ENCODE measurements at regions of chr6 and their contacts with region 1.

Region 1: GRCh38 chr6:32195652-32195901 is 3.1 kb upstream of the GPSM3 start:
- DNase-seq: peak; percentile 99 to 100 (median 100)
- H3K4me3 ChIP-seq: peak overlapping the region in 1 of 2 donors; percentile 97
- H3K4me3 Mint-ChIP-seq: peak overlapping the region; percentile 93 to 100 (median 98)
- H3K27ac ChIP-seq: peak overlapping the region; percentile 98
- H3K27ac Mint-ChIP-seq: peak overlapping the region; percentile 97 to 100 (median 99)
- H3K4me1 ChIP-seq: peaks cover 33% of the 10 kb centered on the region
- H3K4me1 Mint-ChIP-seq: peaks cover 23 to 58% (median 27%) of the 10 kb centered on the region in 4 donors
- H3K27me3 ChIP-seq: no peaks in the 10 kb centered on the region
- H3K27me3 Mint-ChIP-seq: peaks cover 0 to 2% of the 10 kb centered on the region in 2 donors

Region 2: DNA sequence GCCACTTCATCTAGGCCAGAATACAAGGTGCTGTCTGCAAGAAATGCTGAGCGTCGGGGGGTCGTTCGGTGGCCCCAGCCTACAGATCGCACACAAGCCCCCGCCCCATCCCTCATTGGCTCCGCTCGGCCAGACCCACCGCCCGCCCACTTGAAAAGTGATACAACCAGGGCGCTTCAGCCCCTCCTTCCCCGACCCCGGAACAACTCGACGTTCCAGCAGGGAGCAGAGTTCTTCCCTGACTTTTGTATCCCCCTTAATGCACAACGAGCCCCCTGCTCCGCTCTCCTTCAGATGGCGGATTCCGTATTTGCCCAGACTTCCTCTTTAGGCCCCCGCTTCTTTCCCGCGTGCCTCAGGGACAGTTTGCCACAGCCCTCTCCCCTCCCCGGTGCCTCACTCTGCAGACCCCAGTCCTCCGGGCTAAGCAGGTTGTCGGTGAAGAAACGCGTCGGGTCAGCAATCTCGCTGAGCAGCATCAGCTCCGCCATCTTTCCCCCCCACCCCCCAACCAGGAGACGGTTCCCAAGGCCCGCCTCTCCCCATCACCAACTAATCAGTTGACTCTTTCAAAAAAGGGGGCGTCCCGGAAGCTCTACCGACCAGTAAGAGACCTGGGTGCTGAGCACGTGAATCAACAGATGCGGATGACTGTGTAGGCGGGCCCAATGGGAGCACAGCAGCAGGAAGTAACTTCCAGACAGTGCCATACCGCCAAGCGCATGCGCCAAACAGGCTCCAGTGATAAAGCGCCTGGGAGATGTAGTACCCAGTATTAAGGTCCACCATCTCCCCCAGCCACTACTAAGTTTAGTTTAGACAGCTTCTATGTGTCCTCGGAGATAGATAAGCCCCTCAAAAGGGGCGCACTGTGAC is 67.6 kb before region 1 on chr6 and contains the start of gene ATF6B:
- CTCF ChIA-PET with region 1: interaction called, 15 read pairs
- POLR2A ChIA-PET with region 1: interaction called, 188 read pairs
- intact Hi-C with region 1: loop called (anchors 1 kb)
- DNase-seq: peak; percentile 92 to 100 (median 98)
- H3K4me3 ChIP-seq: peak within 1 kb of the TSS; percentile 74 to 87
- H3K4me3 Mint-ChIP-seq: peak within 1 kb of the TSS; percentile 97 to 100 (median 99)
- H3K27ac ChIP-seq: peak within 1 kb of the TSS; percentile 83
- H3K27ac Mint-ChIP-seq: peak within 1 kb of the TSS; percentile 89 to 99 (median 99)
- H3K4me1 ChIP-seq: peaks cover 35% of the 10 kb centered on the region
- H3K4me1 Mint-ChIP-seq: peaks cover 33 to 57% (median 46%) of the 10 kb centered on the region in 4 donors
- H3K27me3 ChIP-seq: no peaks in the 10 kb centered on the region
- H3K27me3 Mint-ChIP-seq: peaks cover 0 to 2% of the 10 kb centered on the region in 2 donors
- total RNA-seq, gene ATF6B: 151 to 154 TPM

Region 3: DNA sequence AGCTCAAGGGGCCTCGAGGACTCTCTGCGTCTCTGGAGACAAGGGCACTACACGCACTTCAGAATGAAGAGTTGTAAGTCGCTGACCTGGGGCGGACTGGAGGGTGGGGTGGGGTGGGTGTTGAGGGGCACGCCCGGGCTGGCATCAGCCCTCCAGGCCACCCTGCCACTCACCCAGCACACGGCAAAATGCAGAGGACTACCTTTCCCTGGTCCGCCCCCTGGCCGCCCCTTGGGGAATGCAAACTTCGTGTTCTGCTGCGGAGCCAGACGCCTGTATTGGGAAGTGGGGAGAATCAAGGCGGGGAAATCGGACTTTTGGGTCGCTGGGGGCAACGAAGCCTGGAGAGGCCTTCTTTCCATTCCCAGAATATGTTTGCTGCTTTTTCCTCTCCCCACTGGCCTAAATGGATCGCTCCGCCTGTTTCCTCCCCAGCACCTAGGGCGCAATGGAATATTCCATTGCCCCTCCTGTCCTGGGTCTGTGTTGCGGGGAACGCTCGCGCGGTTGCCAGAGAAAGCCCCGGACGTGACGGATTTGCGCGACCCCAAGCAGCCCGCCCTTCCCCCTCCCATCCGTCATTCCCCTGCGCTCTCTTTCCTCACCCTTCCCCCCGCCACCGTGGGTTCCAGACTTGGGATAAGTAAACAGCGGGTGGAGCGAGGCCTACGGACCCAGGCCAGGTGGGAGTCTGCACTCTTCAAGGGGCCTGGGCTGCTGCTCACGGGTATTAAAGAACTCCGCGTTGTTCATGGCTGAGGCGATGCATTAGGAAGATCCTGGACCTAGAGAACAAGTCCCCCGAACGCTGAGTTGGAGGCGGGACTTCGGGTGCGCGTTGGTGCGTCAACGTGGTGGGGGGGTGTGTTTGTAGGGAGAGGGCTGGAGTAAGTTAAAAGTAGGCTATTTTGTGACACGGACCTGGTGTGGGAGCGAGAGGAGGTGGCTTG is 41.7 kb before region 1 on chr6 and contains the start of gene PPT2:
- CTCF ChIA-PET with region 1: interaction called, 6 read pairs
- POLR2A ChIA-PET with region 1: interaction called, 14 read pairs
- intact Hi-C with region 1: loop called (anchors 1 kb)
- DNase-seq: peak; percentile 62 to 84 (median 70)
- H3K4me3 ChIP-seq: peak within 1 kb of the TSS; percentile 78 to 98
- H3K4me3 Mint-ChIP-seq: peak within 1 kb of the TSS; percentile 95 to 100 (median 98)
- H3K27ac ChIP-seq: peak within 1 kb of the TSS; percentile 42
- H3K27ac Mint-ChIP-seq: peak within 1 kb of the TSS; percentile 92 to 98 (median 94)
- H3K4me1 ChIP-seq: peaks cover 16% of the 10 kb centered on the region
- H3K4me1 Mint-ChIP-seq: peaks cover 30 to 58% (median 41%) of the 10 kb centered on the region in 4 donors
- H3K27me3 ChIP-seq: peaks cover under 1% of the 10 kb centered on the region
- H3K27me3 Mint-ChIP-seq: peaks cover 15 to 25% of the 10 kb centered on the region in 2 donors
- total RNA-seq, gene PPT2: 12.7 to 15.4 TPM

Region 4: DNA sequence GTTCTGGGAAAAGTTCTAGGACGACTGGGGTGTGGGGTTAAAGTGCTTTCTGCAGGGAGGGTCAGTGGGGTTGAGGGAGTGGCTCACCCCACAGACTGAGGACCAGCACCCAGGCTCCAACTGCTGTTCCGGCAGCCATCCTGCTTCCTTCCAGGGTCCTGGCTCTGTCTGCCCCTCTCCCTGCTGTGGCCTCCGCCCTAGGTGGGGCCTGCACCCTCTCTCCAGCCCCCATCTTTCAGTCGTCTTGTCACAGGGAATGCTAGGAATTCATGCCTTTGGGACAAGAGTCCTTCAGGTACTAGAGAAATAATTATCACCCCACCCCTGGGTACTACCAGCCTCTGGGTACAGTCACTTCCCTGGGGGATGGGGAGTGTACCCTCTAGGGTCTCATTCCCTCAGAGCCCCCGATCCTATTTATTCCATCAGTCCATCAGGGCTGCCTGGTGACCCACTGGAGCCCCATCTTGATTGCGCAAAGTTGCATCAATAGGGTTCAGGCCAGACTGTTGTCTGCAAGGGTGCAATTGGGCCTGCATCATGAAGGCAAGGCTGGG is 11.4 kb before region 1 on chr6 and contains the start of gene AGER:
- CTCF ChIA-PET with region 1: interaction called, 18 read pairs
- POLR2A ChIA-PET with region 1: interaction called, 408 read pairs
- intact Hi-C with region 1: no loop called
- DNase-seq: no peak
- H3K4me3 ChIP-seq: no peak within 1 kb of the TSS
- H3K4me3 Mint-ChIP-seq: peak within 1 kb of the TSS in 1 of 8 donors; percentile 39
- H3K27ac ChIP-seq: peak within 1 kb of the TSS; percentile 70
- H3K27ac Mint-ChIP-seq: peak within 1 kb of the TSS; percentile 36 to 97 (median 64)
- H3K4me1 ChIP-seq: peaks cover 88% of the 10 kb centered on the region
- H3K4me1 Mint-ChIP-seq: peaks cover 40 to 66% (median 50%) of the 10 kb centered on the region in 4 donors
- H3K27me3 ChIP-seq: no peaks in the 10 kb centered on the region
- H3K27me3 Mint-ChIP-seq: no peaks in the 10 kb centered on the region
- total RNA-seq, gene AGER: 74.8 to 77.3 TPM

Region 5: DNA sequence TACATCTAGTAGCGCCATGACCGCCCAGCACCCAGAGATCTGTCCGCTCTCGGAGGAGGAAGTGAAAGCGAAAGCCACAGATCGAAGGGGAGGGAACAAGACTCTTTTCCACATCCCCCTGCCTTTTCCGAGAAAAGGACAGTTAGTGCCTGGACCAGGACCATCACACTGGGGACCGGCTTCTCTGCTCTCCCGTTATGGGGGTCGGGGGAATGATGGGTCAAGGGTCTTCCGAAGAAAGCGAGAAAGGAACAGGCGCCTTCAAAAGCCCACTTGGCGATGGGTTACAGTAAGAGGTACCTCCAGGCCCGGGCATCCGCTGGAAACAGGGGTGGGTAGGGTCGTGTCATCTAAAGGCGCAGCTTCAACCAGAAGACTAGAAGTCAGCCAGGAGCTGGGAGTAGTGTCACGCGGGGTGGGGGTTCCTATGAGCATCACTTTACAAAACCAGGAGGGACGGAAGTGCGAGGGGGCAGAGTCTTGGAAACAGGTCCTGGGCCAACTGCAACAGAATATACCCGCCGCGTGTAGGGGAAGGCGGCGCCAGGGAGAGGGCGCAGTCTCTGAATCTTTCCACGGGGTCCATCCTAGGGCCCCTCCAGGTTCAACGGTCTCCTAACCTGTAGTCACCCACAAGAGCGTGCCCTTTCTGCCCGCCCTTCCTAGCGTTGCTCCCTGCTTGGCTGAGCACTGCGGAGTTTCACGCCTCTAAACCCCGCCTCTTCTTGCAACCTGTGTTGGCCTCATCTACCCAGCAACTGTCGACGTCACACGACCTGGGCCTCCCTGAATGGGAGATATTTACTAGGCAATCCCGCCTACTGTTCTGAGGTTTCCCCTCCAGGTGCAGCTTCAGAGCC is 648.6 kb after region 1 on chr6 and contains the start of gene PSMB8:
- CTCF ChIA-PET with region 1: no interaction called
- POLR2A ChIA-PET with region 1: interaction called, 28 read pairs
- intact Hi-C with region 1: no loop called
- DNase-seq: peak; percentile 97 to 100 (median 98)
- H3K4me3 ChIP-seq: peak within 1 kb of the TSS; percentile 89 to 98
- H3K4me3 Mint-ChIP-seq: peak within 1 kb of the TSS; percentile 94 to 100 (median 97)
- H3K27ac ChIP-seq: peak within 1 kb of the TSS; percentile 99
- H3K27ac Mint-ChIP-seq: peak within 1 kb of the TSS; percentile 99 to 100 (median 99)
- H3K4me1 ChIP-seq: peaks cover 81% of the 10 kb centered on the region
- H3K4me1 Mint-ChIP-seq: peaks cover 61 to 98% (median 72%) of the 10 kb centered on the region in 4 donors
- H3K27me3 ChIP-seq: no peaks in the 10 kb centered on the region
- H3K27me3 Mint-ChIP-seq: no peaks in the 10 kb centered on the region
- total RNA-seq, gene PSMB8: 134 to 138 TPM